K562 (cell line): ENCODE measurements at regions of chrX and their contacts with region 1.

Region 1: DNA sequence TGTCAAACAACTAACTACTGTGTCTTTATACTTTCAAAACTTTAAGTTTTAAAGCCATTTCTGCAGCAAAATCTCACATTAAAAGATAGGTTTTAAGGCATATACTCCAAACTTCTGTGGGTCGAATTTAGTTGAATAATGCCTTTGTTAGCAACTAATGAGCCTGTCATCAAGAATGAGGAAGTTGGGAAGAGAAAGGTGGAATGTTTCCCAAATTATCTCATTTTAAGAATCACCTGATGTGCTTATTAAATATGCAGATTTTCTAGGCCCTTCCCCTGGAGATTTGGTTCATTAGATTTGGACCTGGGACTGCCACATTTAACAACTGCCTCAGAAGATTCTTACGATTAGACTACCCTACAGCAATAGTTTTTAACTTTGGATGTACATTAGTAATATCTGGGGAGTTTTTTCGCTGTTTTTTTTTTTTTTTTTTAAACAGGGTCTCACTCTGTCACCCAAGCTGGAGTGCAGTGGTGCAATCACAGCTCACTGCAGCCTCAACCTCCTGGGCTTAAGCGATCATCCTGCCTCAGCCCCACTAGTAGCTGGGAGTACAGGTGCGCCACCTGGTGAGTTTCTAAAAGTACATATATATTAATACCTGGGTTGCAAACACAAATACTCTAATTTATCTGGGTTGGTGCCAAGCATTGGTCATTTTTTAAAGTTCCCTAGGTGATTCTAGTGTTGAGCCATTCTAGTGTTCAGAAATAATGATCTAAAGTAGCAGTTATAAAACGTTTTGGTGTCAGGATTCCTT is 16.1 kb upstream of the TASL start:
- DNase-seq: no peak
- ATAC-seq: no peak
- H3K4me3 ChIP-seq: no peak overlapping the region
- H3K27ac ChIP-seq: no peak overlapping the region
- H3K4me1 ChIP-seq: no peaks in the 10 kb centered on the region
- H3K27me3 ChIP-seq: 0 out of 5 replicates have a peak, but pooled peaks cover 0 to 2% of the 10 kb centered on the region in 2 experiments
- CTCF ChIP-seq: no peak
- EP300 ChIP-seq: no peak
- POLR2A ChIP-seq: no peak
- RAD21 ChIP-seq: no peak

Region 2: GRCh38 chrX:29488919-29489318 is 1104.7 kb before region 1 on chrX:
- CTCF ChIA-PET with region 1: no interaction called
- POLR2A ChIA-PET with region 1: no interaction called
- in situ Hi-C with region 1: no loop called
- intact Hi-C with region 1: loop called (anchors 10 kb)
- DNase-seq: no peak
- ATAC-seq: no peak
- H3K4me3 ChIP-seq: no peak overlapping the region
- H3K27ac ChIP-seq: no peak overlapping the region
- H3K4me1 ChIP-seq: no peaks in the 10 kb centered on the region
- H3K27me3 ChIP-seq: no peaks in the 10 kb centered on the region
- CTCF ChIP-seq: no peak
- EP300 ChIP-seq: no peak
- POLR2A ChIP-seq: no peak
- RAD21 ChIP-seq: no peak

Region 3: GRCh38 chrX:30748393-30748841 is 154.8 kb after region 1 on chrX:
- CTCF ChIA-PET with region 1: no interaction called
- POLR2A ChIA-PET with region 1: no interaction called
- in situ Hi-C with region 1: no loop called
- intact Hi-C with region 1: no loop called
- DNase-seq: peak; percentile 17 to 51 (median 25)
- ATAC-seq: peak; percentile 72
- H3K4me3 ChIP-seq: no peak overlapping the region
- H3K27ac ChIP-seq: no peak overlapping the region
- H3K4me1 ChIP-seq: no peaks in the 10 kb centered on the region; a peak in 1 of 5 replicates
- H3K27me3 ChIP-seq: no peaks in the 10 kb centered on the region
- CTCF ChIP-seq: no peak
- EP300 ChIP-seq: no peak
- POLR2A ChIP-seq: no peak
- RAD21 ChIP-seq: no peak